Activated CD4-positive, alpha-beta memory T cell treated with anti-CD3 and anti-CD28 coated beads for 36 hours (primary cell): ENCODE measurements at regions of chr11 and their contacts with region 1.

Region 1: GRCh38 chr11:57644748-57645688 is 4.7 kb downstream of the YPEL4 start:
- DNase-seq: peak; percentile 90
- H3K4me3 Mint-ChIP-seq: no peak overlapping the region
- H3K27ac Mint-ChIP-seq: no peak overlapping the region
- H3K4me1 Mint-ChIP-seq: peaks cover 36% of the 10 kb centered on the region
- H3K27me3 Mint-ChIP-seq: peaks cover 42% of the 10 kb centered on the region

Region 2: GRCh38 chr11:57345555-57346211 is 299.3 kb before region 1 on chr11:
- CTCF ChIA-PET with region 1: interaction called, 14 read pairs
- POLR2A ChIA-PET with region 1: no interaction called
- intact Hi-C with region 1: loop called (anchors 2 kb)
- DNase-seq: peak; percentile 76
- H3K4me3 Mint-ChIP-seq: no peak overlapping the region
- H3K27ac Mint-ChIP-seq: no peak overlapping the region
- H3K4me1 Mint-ChIP-seq: peaks cover 2% of the 10 kb centered on the region
- H3K27me3 Mint-ChIP-seq: peaks cover 2% of the 10 kb centered on the region

Region 3: GRCh38 chr11:57546869-57547475 is 98.0 kb before region 1 on chr11:
- CTCF ChIA-PET with region 1: interaction called, 12 read pairs
- POLR2A ChIA-PET with region 1: no interaction called
- intact Hi-C with region 1: no loop called
- DNase-seq: peak; percentile 30
- H3K4me3 Mint-ChIP-seq: no peak overlapping the region
- H3K27ac Mint-ChIP-seq: peak overlapping the region; percentile 67
- H3K4me1 Mint-ChIP-seq: peaks cover 4% of the 10 kb centered on the region
- H3K27me3 Mint-ChIP-seq: no peaks in the 10 kb centered on the region

Region 4: GRCh38 chr11:57598831-57599155 is 46.2 kb before region 1 on chr11:
- CTCF ChIA-PET with region 1: interaction called, 6 read pairs
- POLR2A ChIA-PET with region 1: no interaction called
- intact Hi-C with region 1: loop called (anchors 1 kb)
- DNase-seq: no peak
- H3K4me3 Mint-ChIP-seq: no peak overlapping the region
- H3K27ac Mint-ChIP-seq: no peak overlapping the region
- H3K4me1 Mint-ChIP-seq: no peaks in the 10 kb centered on the region
- H3K27me3 Mint-ChIP-seq: peaks cover 37% of the 10 kb centered on the region

Region 5: DNA sequence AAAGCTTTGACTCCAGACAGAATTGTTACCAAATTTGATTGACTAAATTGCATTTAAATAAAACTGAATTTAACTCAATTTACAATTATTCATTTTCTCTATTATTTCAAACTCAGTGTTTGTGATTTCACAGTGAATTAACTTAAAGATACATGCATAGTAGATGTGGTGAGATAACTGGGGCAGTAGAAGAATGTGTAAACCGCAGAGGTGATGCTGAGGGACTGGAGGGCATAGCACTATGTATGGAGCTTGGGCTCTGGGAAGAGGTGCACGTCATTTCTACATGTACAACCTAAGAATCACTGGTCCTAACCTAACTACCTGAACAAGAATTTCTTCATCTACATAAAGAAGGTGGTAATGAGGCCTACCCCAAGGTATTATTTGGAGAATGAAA is 700.2 kb after region 1 on chr11:
- CTCF ChIA-PET with region 1: no interaction called
- POLR2A ChIA-PET with region 1: no interaction called
- intact Hi-C with region 1: no loop called
- DNase-seq: no peak
- H3K4me3 Mint-ChIP-seq: no peak overlapping the region
- H3K27ac Mint-ChIP-seq: no peak overlapping the region
- H3K4me1 Mint-ChIP-seq: no peaks in the 10 kb centered on the region
- H3K27me3 Mint-ChIP-seq: peaks cover 8% of the 10 kb centered on the region